Activated CD4-positive, alpha-beta memory T cell treated with anti-CD3 and anti-CD28 coated beads for 36 hours (primary cell): ENCODE measurements at regions of chr5 and their contacts with region 1.

Region 1: GRCh38 chr5:35089334-35090314 is 41.9 kb upstream of the AGXT2 start:
- DNase-seq: peak; percentile 64
- H3K4me3 Mint-ChIP-seq: no peak overlapping the region
- H3K27ac Mint-ChIP-seq: no peak overlapping the region
- H3K4me1 Mint-ChIP-seq: no peaks in the 10 kb centered on the region
- H3K27me3 Mint-ChIP-seq: peaks cover 3% of the 10 kb centered on the region

Region 2: DNA sequence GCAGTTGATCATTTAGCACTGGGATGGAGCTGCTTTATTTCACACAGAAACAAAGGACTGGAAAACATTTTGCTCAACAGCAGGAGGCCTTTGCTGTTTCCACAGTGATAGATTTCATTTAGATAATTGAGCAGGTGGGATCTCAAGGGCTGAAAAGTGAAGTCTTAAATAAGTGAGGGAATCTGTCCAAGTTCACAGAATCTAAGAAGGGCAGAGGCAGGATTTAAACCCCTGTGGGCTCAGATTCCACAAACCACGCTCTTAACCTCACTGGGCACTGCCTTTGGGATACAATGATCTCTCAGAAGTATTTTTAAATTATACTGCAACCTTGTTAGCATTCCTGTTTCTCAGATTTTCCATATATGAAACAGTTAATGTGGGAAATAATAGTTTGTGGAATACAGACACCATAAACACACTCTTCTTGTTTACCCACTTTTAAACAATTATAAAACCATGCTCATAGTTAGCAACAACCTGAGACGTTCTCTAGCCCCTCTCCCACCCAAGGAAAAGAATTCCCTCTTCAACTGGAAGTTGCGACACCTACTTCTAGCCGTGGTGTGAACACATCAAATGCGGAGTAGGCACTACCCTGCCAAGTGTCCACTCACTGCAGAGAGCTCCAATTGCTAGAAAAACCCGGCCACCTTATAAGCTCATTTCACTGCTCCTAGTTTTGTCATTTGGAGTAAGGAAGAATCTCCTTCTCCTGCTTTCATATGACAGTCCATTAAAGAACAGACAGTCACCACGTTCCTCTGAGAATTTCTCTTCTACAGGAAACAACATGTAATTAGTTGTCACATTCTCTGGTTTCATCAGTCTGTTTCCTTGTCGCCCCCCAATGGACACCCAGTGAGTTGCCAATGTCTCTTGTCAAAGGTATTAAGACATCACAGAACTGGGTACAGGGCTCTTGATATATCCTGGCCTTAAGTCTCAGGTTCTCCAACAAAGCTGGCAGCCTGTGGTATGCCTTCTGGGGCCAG is 93.2 kb after region 1 on chr5:
- CTCF ChIA-PET with region 1: interaction called, 8 read pairs
- POLR2A ChIA-PET with region 1: no interaction called
- intact Hi-C with region 1: loop called (anchors 1 kb)
- DNase-seq: peak; percentile 51
- H3K4me3 Mint-ChIP-seq: no peak overlapping the region
- H3K27ac Mint-ChIP-seq: no peak overlapping the region
- H3K4me1 Mint-ChIP-seq: no peaks in the 10 kb centered on the region
- H3K27me3 Mint-ChIP-seq: peaks cover 7% of the 10 kb centered on the region

Region 3: DNA sequence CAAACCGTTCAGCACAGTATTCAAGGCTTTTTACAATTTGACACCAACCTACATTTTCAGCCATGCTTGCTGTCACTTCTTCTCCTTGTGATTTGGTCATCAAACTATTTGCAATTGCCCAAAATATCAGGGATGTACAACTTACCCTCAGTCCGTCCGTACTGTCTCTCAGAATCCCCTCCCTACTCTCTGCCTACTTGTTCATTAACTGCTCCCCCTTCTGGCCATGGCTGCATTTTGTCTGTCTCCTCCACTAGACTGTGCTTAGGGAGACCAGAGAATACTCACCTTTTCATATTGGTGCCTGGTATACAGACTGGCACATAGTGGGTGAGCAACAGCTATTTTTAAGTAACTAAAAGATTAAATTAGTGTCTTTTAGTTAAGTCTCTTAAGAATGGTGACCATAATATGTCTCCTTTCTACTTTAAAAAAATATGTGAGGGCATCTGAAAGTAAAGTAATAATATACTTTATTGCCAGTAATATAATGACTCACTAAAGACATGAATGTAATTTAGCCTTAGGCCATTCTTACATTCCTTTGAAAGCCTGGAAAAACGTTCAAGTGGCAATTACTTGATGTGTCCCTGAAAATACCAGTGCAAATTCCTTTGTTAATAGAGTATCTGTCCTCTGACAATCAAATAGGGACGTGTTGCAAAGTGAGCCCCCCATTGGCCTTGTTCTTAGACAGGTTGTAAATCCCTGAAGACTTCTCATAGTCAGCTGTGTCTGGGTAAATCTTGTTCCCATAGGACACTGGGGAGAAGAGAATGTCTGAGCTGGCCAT is 112.9 kb after region 1 on chr5:
- CTCF ChIA-PET with region 1: no interaction called
- POLR2A ChIA-PET with region 1: no interaction called
- intact Hi-C with region 1: loop called (anchors 1 kb)
- DNase-seq: peak; percentile 54
- H3K4me3 Mint-ChIP-seq: no peak overlapping the region
- H3K27ac Mint-ChIP-seq: no peak overlapping the region
- H3K4me1 Mint-ChIP-seq: no peaks in the 10 kb centered on the region
- H3K27me3 Mint-ChIP-seq: peaks cover 15% of the 10 kb centered on the region